Activated CD4-positive, alpha-beta T cell treated with anti-CD3 and anti-CD28 coated beads, Interleukin-2, amount 10 ng/mL, durations not matched to agents 24 days and 14 days (primary cell): ENCODE measurements at regions of chr10 and their contacts with region 1.

Region 1: GRCh38 chr10:79487296-79488194 is 24.8 kb upstream of the EIF5AL1 start:
- DNase-seq: peak; percentile 76
- H3K4me3 Mint-ChIP-seq: no peak overlapping the region
- H3K27ac Mint-ChIP-seq: no peak overlapping the region
- H3K4me1 Mint-ChIP-seq: no peaks in the 10 kb centered on the region
- H3K27me3 Mint-ChIP-seq: peaks cover 5% of the 10 kb centered on the region

Region 2: GRCh38 chr10:79374312-79375191 is 113.0 kb before region 1 on chr10:
- intact Hi-C with region 1: loop called (anchors 1 kb)
- DNase-seq: peak; percentile 93
- H3K4me3 Mint-ChIP-seq: no peak overlapping the region
- H3K27ac Mint-ChIP-seq: peak overlapping the region; percentile 14
- H3K4me1 Mint-ChIP-seq: peaks cover 3% of the 10 kb centered on the region
- H3K27me3 Mint-ChIP-seq: peaks cover 16% of the 10 kb centered on the region

Region 3: DNA sequence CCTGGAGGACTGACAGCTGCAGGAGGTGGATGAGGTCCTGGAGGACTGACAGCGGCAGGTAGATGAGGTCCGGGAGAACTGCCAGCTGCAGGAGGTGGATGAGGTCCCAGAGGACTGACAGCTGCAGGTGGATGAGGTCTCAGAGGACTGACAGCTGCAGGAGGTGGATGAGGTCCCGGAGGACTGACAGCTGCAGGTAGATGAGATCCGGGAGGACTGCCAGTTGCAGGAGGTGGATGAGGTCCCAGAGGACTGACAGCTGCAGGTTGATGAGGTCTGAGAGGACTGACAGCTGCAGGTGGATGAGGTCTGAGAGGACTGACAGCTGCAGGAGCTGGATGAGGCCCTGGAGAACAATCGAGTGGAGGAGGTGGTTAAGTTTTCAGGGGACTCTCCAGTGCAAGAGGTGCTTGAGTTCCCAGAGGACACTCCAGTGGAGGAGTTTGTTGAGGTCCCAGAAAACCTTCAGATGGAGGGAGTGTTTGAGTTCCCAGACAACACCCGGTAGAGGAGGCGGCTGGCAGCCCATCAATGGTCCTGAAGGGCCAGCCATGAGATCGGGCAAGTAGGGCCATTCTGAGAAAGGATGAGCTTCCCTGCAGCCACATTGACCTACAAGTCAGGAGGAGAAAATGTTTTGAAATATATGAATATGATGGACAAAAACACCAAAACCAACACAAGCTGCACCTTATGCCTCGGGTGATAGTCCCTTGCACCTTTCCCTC is 20.1 kb after region 1 on chr10:
- intact Hi-C with region 1: no loop called
- DNase-seq: peak; percentile 48
- H3K4me3 Mint-ChIP-seq: no peak overlapping the region
- H3K27ac Mint-ChIP-seq: no peak overlapping the region
- H3K4me1 Mint-ChIP-seq: peaks cover 9% of the 10 kb centered on the region
- H3K27me3 Mint-ChIP-seq: peaks cover 24% of the 10 kb centered on the region